ENCODE measurements at regions of chr6 and their contacts with region 1.

Region 1: GRCh38 chr6:3118353-3119039 is at the start of gene BPHL:
- DNase-seq: peak; percentile 94
- H3K4me3 ChIP-seq: peak within 1 kb of the TSS; percentile 77 to 92 (median 85)
- H3K27ac ChIP-seq: peak within 1 kb of the TSS; percentile 96
- H3K4me1 ChIP-seq: peaks cover 4% of the 10 kb centered on the region
- H3K27me3 ChIP-seq: no peaks in the 10 kb centered on the region
- CTCF ChIP-seq: no peak
- total RNA-seq, gene BPHL: 24.8 to 25.8 TPM

Region 2: GRCh38 chr6:2959909-2960719 is 158.4 kb before region 1 on chr6:
- CTCF ChIA-PET with region 1: no interaction called
- dilution Hi-C with region 1: no loop called
- in situ Hi-C with region 1: no loop called
- intact Hi-C with region 1: no loop called
- DNase-seq: peak; percentile 48
- H3K4me3 ChIP-seq: no peak overlapping the region
- H3K27ac ChIP-seq: no peak overlapping the region
- H3K4me1 ChIP-seq: peaks cover 12% of the 10 kb centered on the region
- H3K27me3 ChIP-seq: no peaks in the 10 kb centered on the region
- CTCF ChIP-seq: no peak

Region 3: DNA sequence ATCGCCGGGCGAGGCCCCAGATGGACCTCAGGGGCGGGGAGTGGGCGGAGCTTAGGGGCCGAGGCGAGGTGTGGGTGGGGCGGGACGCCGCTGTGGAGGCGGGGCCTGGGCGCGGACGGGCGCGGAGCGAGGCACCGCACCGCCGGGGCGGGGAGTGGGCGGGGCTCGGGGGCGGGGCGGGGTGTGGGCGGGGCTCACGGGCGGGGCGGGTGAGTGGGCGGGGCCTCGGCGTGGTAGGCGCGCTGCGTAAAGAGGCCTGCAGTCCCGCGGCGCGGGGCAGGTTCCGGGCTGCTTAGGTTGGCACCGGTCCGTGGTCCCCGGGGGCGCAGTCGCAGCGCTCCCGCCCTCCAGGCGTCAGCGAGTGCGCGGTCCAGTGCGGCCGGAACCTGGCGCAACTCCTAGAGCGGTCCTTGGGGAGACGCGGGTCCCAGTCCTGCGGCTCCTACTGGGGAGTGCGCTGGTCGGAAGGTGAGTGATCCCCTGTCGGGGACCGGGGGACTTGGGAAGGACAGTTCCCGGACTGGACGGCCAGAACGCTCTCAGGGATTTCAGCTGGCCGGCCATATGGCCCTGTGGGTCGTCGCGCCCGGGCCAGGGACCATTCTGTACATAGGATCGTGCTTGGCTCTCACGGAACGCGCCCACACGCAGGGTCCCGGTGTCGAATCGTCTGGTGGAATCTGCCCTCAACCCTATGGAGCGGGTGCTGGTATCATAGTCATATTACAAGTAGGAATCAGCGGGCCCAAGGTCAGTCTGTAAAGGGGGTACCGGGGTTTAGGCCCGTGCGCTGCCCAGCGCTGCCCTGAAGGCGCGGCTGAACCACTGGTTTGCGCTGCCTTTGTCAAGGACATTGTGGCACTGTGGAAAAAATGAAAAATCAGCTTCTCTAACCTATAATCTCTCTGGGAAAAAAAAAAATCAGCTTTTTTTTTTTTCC is 118.6 kb before region 1 on chr6 and contains the start of gene NQO2:
- CTCF ChIA-PET with region 1: no interaction called
- dilution Hi-C with region 1: no loop called
- in situ Hi-C with region 1: no loop called
- intact Hi-C with region 1: loop called (anchors 5 kb)
- DNase-seq: no peak
- H3K4me3 ChIP-seq: peak within 1 kb of the TSS; percentile 62 to 94 (median 80)
- H3K27ac ChIP-seq: peak within 1 kb of the TSS; percentile 47
- H3K4me1 ChIP-seq: peaks cover 22% of the 10 kb centered on the region
- H3K27me3 ChIP-seq: no peaks in the 10 kb centered on the region
- CTCF ChIP-seq: peak in 1 of 2 donors; percentile 6
- total RNA-seq, gene NQO2: 17.0 to 20.3 TPM

Region 4: DNA sequence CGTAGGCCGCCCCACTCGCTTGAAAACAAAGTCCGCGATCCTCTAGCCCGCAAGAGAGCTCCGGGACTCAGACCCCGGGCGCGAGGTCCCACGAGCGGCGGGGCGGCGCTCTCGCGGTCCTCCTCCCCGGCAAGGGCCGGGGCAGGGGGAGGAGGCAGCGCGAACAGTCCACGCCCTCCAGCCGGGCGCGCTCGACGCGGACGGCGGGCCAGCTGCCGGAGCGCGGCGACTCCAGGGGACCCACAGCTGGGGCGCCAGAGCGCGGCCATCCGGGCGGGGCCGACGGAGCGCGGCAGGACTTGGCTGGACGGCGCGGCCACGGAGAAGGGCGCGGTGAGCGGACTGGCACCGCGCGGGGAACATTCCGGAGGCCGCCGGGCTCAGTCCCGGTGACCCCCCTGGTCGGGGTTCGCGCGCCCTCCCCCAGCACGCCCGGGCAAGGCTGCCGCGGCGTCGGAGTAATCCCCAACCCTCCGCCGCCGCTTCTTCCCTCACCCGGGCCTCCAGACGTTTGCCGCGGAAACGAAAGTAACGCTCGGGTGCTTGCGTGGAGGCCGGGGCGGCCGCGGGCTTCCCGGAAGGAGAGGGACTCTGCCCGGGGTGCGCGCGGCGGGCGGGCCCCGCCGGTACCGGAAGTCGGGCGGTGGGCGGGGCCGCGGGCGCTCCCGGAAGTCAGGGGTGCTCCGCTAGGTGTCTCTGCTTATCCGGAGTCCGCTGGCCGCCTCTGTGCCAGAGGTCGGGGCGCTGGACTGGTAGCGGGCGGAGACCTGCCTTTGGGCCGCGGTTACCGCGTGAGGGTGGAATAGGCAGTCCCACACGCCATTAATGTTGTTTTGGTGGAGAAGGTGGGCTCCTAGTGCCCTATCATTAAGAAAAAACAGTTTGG is 49.9 kb before region 1 on chr6 and contains the start of gene RIPK1:
- CTCF ChIA-PET with region 1: no interaction called
- dilution Hi-C with region 1: no loop called
- in situ Hi-C with region 1: no loop called
- intact Hi-C with region 1: loop called (anchors 2 kb)
- DNase-seq: peak; percentile 90
- H3K4me3 ChIP-seq: peak within 1 kb of the TSS; percentile 66 to 84 (median 75)
- H3K27ac ChIP-seq: peak within 1 kb of the TSS; percentile 84
- H3K4me1 ChIP-seq: peaks cover 7% of the 10 kb centered on the region
- H3K27me3 ChIP-seq: no peaks in the 10 kb centered on the region
- CTCF ChIP-seq: peak in 1 of 2 donors; percentile 49
- total RNA-seq, gene RIPK1: 21.1 to 26.8 TPM

Region 5: GRCh38 chr6:3079700-3080099 is 38.8 kb before region 1 on chr6:
- CTCF ChIA-PET with region 1: no interaction called
- dilution Hi-C with region 1: no loop called
- in situ Hi-C with region 1: no loop called
- intact Hi-C with region 1: no loop called
- DNase-seq: no peak
- H3K4me3 ChIP-seq: no peak overlapping the region
- H3K27ac ChIP-seq: no peak overlapping the region
- H3K4me1 ChIP-seq: peaks cover 13% of the 10 kb centered on the region
- H3K27me3 ChIP-seq: no peaks in the 10 kb centered on the region
- CTCF ChIP-seq: no peak

Region 6: DNA sequence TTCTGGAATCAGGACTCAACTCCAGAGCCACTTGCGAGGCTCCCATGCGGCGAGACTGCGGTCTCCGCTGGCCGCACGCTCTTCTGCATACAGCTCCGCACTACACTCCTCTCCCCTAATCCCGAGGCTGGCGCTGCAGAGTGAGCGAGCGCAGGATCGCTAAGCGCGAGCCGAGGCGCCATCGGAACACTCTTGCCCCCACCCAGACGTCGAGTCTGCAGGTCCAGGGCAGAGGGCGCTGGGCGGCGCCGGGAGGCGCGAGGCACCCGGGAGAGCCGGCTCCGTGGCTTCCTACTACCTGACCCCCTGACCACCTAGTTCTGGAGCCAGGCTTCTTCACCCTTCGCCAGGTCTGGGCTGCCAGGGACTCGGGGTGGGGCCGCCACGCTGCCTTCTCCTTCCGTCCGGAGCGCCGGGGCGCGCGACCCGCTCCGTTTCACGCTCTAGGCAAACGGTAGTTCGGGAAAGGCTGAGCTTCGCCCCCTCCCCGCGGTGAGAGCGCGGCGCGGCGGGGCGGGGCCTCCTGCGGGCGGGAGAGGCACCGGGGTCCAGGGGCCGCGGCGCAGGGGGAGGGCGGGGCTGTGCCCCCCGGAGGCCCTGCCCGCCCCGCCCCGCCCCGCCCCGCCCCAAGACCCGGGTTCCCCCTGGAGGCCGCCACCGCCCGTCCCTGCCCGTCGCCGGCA is 44.2 kb after region 1 on chr6:
- CTCF ChIA-PET with region 1: no interaction called
- dilution Hi-C with region 1: loop called (anchors 5 kb)
- in situ Hi-C with region 1: no loop called
- intact Hi-C with region 1: no loop called
- DNase-seq: peak; percentile 69
- H3K4me3 ChIP-seq: peak overlapping the region; percentile 54 to 74 (median 62)
- H3K27ac ChIP-seq: peak overlapping the region; percentile 18
- H3K4me1 ChIP-seq: peaks cover 13% of the 10 kb centered on the region
- H3K27me3 ChIP-seq: no peaks in the 10 kb centered on the region
- CTCF ChIP-seq: peak in 1 of 2 donors; percentile 30

Measured in mammary epithelial cell (primary cell).